ENCODE measurements at regions of chr2 and their contacts with region 1.

Region 1: DNA sequence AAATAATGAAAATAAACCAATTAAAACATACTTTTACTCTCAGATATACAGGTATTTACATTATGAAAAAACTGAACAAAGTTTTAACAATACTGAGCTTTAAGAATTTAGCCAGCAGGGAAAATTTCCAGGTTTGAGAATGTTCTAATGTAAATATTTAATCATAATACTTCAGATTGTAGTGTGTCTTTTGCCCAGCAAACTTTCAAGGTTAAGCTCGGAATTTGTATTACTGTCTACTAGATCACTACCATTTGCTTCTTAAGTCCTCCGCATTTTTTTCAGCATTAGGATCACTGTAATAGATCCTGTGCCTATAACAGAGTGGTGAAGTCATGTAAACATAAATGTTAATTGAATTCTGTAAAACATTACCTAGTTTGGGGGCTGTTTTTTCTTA is 52.7 kb downstream of the CFAP210 start:
- DNase-seq: no peak
- ATAC-seq: no peak
- H3K4me3 ChIP-seq: no peak overlapping the region
- H3K4me3 Mint-ChIP-seq: no peak overlapping the region
- H3K27ac ChIP-seq: no peak overlapping the region
- H3K27ac Mint-ChIP-seq: no peak overlapping the region
- H3K4me1 ChIP-seq: no peaks in the 10 kb centered on the region
- H3K4me1 Mint-ChIP-seq: no peaks in the 10 kb centered on the region
- H3K27me3 ChIP-seq: no peaks in the 10 kb centered on the region
- H3K27me3 Mint-ChIP-seq: peaks cover 0 to 7% (median 0%) of the 10 kb centered on the region in 5 donors

Region 2: GRCh38 chr2:169590804-169591203 is 50.7 kb before region 1 on chr2:
- CTCF ChIA-PET with region 1: no interaction called
- POLR2A ChIA-PET with region 1: no interaction called
- intact Hi-C with region 1: loop called in 1 of 2 experiments (anchors 5 kb)
- DNase-seq: no peak
- ATAC-seq: no peak
- H3K4me3 ChIP-seq: no peak overlapping the region
- H3K4me3 Mint-ChIP-seq: peak overlapping the region in 2 of 10 donors; percentile 8 to 51
- H3K27ac ChIP-seq: no peak overlapping the region
- H3K27ac Mint-ChIP-seq: peak overlapping the region in 1 of 9 donors; percentile 45
- H3K4me1 ChIP-seq: peaks cover 14 to 27% of the 10 kb centered on the region in 2 donors
- H3K4me1 Mint-ChIP-seq: peaks cover 23 to 82% (median 52%) of the 10 kb centered on the region in 7 donors
- H3K27me3 ChIP-seq: no peaks in the 10 kb centered on the region
- H3K27me3 Mint-ChIP-seq: no peaks in the 10 kb centered on the region

Region 3: GRCh38 chr2:169862816-169863215 is 221.4 kb after region 1 on chr2:
- CTCF ChIA-PET with region 1: no interaction called
- POLR2A ChIA-PET with region 1: no interaction called
- intact Hi-C with region 1: no loop called
- DNase-seq: no peak
- ATAC-seq: no peak
- H3K4me3 ChIP-seq: no peak overlapping the region
- H3K4me3 Mint-ChIP-seq: no peak overlapping the region
- H3K27ac ChIP-seq: no peak overlapping the region
- H3K27ac Mint-ChIP-seq: no peak overlapping the region
- H3K4me1 ChIP-seq: no peaks in the 10 kb centered on the region
- H3K4me1 Mint-ChIP-seq: peaks cover 3 to 70% (median 50%) of the 10 kb centered on the region in 7 donors
- H3K27me3 ChIP-seq: no peaks in the 10 kb centered on the region
- H3K27me3 Mint-ChIP-seq: no peaks in the 10 kb centered on the region

Measured in naive thymus-derived CD4-positive, alpha-beta T cell (primary cell).